ENCODE measurements at regions of chr17 and their contacts with region 1.

Region 1: DNA sequence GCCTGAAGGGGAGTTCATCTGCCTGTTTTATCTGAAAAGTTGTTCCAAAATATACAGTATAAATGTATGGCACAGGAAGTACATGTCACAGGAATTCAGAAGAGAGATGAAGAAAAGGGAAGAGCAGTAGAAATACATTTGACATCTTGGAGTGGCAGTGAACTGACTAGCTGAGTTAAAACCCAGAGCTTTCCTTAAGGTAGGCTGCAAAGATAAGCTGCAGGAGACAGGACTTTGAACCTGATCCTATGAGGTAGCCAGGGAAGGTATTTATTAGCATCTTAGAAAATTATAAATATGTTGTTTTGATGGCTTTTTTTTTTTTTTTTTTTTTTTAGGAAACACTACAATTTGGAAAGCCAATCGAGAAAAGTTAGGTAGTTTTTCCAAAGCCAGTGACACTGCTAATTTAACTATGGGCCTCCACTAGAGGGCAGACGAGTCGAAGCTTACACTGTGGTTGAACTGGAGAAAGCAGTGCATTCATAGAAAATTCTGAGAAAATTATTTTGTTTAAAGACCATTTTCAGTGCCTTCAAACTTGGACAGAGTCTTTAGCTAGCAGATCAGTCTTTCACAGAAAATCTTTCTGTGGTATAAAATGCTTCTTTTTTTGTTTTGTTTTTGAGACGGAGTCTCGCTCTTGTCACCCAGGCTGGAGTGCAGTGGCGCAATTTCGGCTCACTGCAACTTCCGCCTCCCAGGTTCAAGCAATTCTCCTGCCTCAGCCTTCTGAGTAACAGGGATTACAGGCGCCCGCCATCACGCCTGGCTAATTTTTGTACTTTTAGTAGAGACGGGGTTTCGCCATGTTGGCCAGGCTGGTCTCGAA is 122.3 kb downstream of the SSH2 start:
- DNase-seq: peak; percentile 87
- H3K4me3 Mint-ChIP-seq: no peak overlapping the region
- H3K27ac Mint-ChIP-seq: no peak overlapping the region
- H3K4me1 Mint-ChIP-seq: peaks cover 14% of the 10 kb centered on the region
- H3K27me3 Mint-ChIP-seq: no peaks in the 10 kb centered on the region

Region 2: DNA sequence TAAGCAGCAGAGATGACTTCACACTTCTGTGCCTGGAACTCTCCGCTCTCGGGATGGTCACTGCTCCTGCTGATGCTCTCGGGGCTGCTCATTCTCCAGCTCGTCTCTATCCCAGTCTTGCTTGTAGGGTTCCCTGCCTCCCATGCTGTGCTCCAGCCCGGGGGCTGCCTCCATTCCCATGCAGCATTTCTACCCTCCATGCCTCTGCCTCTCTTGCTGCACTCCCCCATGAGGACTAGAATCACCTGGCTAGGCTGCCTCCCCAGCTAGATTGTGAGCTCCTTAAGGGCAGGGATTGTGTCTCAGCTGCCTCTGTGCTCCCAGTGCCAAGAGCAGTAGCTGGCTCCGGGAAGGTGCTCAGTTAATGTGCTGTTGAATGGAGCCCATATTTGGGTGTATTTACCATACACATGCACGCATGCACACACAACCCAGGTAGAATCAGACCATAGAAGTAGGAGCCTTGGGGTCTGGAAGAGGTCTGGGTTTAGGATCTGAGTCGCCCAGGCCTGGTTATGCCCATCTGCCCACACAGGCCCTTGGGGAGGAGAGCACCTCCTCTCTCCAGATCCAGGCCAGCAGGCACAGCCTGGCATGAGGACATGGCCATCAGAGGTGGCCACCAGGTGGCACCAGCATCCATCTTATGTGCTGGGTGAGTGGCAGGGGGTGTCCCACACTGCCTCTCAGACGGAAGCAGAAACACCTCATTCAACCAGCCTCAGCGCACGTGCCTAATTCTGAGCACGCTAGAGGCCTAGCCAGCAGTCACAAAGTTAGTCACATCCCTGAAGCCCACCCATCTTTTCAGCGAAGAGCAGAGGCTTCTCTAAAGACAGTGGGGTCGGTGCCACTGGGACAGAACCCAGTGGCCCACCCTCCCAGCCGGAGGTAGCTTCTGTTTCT is 227.6 kb before region 1 on chr17:
- CTCF ChIA-PET with region 1: no interaction called
- intact Hi-C with region 1: loop called (anchors 1 kb)
- DNase-seq: peak; percentile 96
- H3K4me3 Mint-ChIP-seq: no peak overlapping the region
- H3K27ac Mint-ChIP-seq: peak overlapping the region; percentile 77
- H3K4me1 Mint-ChIP-seq: peaks cover 24% of the 10 kb centered on the region
- H3K27me3 Mint-ChIP-seq: no peaks in the 10 kb centered on the region

Region 3: GRCh38 chr17:29789196-29790170 is 18.3 kb before region 1 on chr17:
- CTCF ChIA-PET with region 1: no interaction called
- intact Hi-C with region 1: no loop called
- DNase-seq: no peak
- H3K4me3 Mint-ChIP-seq: no peak overlapping the region
- H3K27ac Mint-ChIP-seq: no peak overlapping the region
- H3K4me1 Mint-ChIP-seq: peaks cover 4% of the 10 kb centered on the region
- H3K27me3 Mint-ChIP-seq: no peaks in the 10 kb centered on the region

Region 4: DNA sequence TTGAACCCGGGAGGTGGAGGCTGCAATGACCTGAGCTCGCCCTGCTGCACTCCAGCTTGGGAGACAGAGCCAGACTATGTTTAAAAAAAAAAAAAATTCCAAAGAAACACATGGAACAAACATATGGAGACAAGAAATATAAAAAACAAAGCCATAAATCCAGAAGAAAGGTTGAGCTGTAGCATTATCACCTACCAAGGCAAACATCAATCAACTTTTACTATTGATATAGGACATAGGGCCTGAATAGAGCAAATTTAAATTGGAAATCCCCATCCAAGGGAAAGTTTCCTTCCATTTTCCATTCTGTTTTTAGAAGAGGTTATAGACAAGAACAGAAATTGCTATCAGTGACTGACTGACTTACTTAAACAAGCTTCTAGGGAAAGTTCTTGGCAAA is 65.7 kb after region 1 on chr17:
- CTCF ChIA-PET with region 1: interaction called, 11 read pairs
- intact Hi-C with region 1: no loop called
- DNase-seq: no peak
- H3K4me3 Mint-ChIP-seq: no peak overlapping the region
- H3K27ac Mint-ChIP-seq: no peak overlapping the region
- H3K4me1 Mint-ChIP-seq: peaks cover 14% of the 10 kb centered on the region
- H3K27me3 Mint-ChIP-seq: no peaks in the 10 kb centered on the region

Region 5: DNA sequence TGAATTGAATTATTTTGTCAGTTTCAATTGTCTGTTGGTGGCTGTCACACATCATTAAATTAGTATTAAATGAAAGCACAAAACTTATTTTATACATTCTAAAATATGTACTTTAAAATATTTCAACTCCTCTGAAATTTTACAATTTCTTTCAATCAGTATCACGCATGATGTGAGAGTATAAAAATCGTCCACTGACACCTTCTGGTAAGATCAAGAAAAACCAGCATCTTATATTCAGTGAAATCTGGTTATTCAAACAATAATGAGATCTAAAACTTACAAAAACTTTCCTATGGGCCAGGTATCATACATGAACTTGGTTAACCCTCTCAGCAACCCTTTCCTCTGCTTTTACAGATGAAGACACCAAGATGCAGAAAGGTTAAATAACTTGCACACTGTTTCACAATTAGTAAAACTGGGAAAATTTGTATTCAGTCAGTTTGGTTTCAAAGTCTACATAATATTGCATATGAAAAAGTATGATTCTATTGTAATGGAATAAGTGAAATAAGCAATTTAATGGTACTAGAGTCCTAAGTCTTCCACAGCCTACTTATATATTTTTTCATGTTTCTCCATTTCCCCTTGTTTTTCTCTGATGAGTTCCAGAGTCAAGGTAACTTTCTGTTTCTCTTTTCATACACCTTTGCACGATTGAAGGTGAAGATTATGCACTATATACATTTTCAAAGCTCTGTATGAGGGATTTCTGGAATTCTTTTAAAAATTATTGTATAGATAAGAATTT is 192.4 kb after region 1 on chr17:
- CTCF ChIA-PET with region 1: interaction called, 3 read pairs
- intact Hi-C with region 1: loop called (anchors 5 kb)
- DNase-seq: no peak
- H3K4me3 Mint-ChIP-seq: no peak overlapping the region
- H3K27ac Mint-ChIP-seq: no peak overlapping the region
- H3K4me1 Mint-ChIP-seq: peaks cover 13% of the 10 kb centered on the region
- H3K27me3 Mint-ChIP-seq: no peaks in the 10 kb centered on the region

Region 6: DNA sequence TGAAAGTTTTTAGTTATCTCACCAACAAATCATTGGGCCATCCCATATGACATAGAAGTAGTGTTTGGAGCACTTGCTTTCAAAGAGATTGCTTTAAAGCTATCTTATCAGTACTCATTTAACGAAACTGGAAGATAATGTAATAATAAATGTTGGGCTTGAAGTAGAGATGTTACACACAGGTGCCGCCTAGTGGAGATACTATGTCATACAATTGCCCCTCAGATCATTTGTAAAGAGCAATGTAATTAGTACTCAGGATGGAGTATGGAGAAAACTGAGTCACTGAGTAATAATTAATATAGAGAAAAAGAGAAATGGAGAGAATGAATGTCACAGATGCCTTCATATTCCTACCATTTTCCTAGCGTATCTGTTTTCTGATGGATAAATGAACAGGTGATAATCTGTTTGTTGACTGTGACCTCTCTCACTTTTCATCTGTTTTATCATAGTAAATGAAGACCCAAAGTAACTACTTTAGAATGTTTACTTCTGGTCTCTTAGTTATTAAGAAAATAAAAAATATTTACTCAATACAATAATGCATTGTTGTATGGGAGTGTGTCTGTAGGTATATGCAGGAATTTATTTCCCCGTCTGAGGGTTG is 214.1 kb after region 1 on chr17:
- CTCF ChIA-PET with region 1: interaction called, 16 read pairs
- intact Hi-C with region 1: loop called (anchors 1 kb)
- DNase-seq: peak; percentile 63
- H3K4me3 Mint-ChIP-seq: no peak overlapping the region
- H3K27ac Mint-ChIP-seq: no peak overlapping the region
- H3K4me1 Mint-ChIP-seq: no peaks in the 10 kb centered on the region
- H3K27me3 Mint-ChIP-seq: no peaks in the 10 kb centered on the region

Measured in activated naive CD4-positive, alpha-beta T cell treated with anti-CD3 and anti-CD28 coated beads for 36 hours (primary cell).